ENCODE measurements at regions of chr1 and their contacts with region 1.

Region 1: DNA sequence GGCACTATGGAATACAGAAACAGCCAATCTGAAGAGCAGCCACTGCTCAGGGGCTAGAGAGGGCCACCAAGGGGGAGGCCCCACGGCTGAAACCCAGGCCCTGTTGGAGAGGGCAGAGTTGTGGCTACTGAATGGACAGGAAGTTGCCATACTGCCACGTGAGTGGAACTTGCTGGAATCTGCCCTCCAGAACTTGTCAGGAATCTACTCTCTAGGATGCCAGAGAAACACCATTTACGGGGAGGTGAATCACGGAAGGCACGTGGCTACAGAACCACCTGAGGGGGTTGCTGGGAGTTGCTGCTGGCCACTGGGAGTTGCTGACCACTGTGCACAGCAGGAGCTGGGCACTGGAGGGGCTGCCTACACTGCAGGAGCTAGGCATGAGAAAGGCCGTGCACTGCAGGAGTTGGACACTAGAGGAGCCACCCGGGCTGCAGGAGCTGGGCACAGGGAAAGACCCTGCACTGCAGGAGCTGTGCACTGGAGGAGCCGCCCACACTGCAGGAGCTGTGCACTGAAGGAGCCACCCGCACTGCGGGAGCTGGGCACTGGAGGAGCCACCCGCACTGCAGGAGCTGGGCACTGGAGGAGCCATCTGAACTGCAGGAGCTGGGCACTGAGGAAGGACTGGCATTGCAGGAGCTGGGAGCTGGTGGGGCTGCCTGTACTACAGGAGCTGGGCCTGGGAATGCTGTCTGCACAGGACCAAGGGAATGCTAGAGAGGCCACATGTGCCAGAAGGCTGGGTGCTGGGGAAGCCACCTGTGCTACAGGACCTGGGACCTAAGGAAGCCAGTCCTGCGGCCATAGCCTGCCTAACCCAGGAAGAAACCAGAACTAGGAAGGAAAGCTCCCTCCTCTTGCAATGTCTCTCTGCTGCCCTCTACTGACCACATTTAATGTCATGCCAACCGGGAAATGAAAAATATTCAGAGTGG is 343.4 kb downstream of the MATN1 start:
- DNase-seq: peak; percentile 26
- H3K4me3 ChIP-seq: no peak overlapping the region
- CTCF ChIP-seq: peak; percentile 82

Region 2: DNA sequence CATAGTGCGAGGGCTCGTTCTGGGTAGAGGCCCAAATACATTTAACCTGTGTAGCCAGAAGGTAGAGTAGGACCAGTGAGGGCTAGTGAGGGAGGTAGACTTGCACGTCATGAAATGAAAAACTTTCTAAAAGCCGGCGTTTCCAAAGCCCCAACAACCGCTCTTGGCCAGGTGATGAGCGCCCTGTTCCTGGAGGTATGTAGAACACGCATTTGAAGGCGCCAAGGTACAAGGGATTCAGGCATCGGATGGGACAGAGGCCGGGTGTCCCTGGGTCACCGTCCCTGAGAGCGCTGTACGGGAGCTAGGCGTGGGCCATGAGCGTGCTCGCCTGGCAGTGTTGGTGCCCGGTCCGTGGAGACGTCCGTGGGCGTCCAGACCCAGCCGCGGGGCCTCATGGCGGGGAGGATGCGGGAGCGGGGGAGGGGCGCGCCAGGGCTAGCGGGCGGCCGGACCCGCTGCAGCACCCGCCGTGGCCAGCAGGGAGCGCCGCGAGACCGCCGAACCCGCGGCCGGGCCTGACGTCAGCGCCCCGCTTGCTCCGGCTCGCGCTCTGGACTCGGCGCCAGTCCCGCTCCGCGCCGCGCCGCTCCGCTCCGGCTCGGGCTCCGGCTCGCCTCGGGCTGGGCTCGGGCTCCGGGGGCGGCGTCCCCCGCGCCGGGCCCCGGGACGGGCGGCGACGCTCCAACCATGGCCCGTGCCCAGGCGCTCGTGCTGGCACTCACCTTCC is 1143.8 kb before region 1 on chr1 and contains the start of gene PTPRU:
- CTCF ChIA-PET with region 1: interaction called, 15 read pairs
- POLR2A ChIA-PET with region 1: no interaction called
- DNase-seq: no peak
- H3K4me3 ChIP-seq: peak within 1 kb of the TSS; percentile 68
- CTCF ChIP-seq: peak; percentile 74

Region 3: DNA sequence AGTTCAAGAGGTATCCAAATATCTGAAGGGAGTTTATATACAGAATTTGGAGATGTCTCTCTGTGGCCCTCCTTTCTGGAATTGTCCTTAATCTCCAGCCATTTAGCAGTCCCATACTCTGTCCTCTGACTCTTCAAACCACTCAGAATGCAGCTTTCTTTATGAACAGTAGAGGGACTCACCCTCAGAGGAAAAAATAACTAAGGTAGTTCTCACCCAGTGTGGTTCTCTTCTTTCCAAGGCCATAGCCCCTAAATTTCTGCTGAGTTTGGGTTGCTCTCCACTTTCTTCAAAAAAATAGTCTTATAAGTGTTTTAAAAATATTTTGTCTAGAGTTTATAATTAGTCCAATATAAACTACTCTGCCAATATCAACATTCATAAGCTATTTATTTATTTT is 26.3 kb before region 1 on chr1:
- CTCF ChIA-PET with region 1: interaction called, 36 read pairs
- POLR2A ChIA-PET with region 1: no interaction called
- DNase-seq: no peak
- H3K4me3 ChIP-seq: no peak overlapping the region
- CTCF ChIP-seq: peak; percentile 28

Region 4: GRCh38 chr1:30359539-30360220 is 20.3 kb before region 1 on chr1:
- CTCF ChIA-PET with region 1: interaction called, 36 read pairs
- POLR2A ChIA-PET with region 1: no interaction called
- DNase-seq: no peak
- H3K4me3 ChIP-seq: no peak overlapping the region
- CTCF ChIP-seq: no peak

Region 5: GRCh38 chr1:30366911-30367310 is 13.0 kb before region 1 on chr1:
- CTCF ChIA-PET with region 1: interaction called, 18 read pairs
- POLR2A ChIA-PET with region 1: no interaction called
- DNase-seq: no peak
- H3K4me3 ChIP-seq: no peak overlapping the region
- CTCF ChIP-seq: no peak

Region 6: DNA sequence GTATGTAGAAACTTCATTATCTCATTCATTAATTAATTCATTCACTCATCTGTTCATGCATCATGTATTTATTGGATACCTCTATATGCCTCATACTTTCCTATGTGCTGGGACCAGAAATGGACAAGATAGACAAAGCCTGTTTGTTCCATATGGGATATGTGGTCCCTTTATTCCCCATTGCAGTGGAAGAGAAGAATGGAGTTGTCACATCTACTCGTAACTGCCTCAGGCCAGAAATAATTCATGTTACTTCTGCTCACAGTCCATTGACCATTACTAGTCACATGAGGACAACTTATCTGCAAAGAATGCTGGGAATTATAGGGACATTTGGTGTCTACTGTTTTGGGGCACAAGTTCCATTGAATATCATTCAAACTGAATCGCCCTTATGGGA is 15.7 kb after region 1 on chr1:
- CTCF ChIA-PET with region 1: interaction called, 27 read pairs
- POLR2A ChIA-PET with region 1: no interaction called
- DNase-seq: no peak
- H3K4me3 ChIP-seq: no peak overlapping the region
- CTCF ChIP-seq: no peak

Region 7: GRCh38 chr1:30611741-30612309 is 231.9 kb after region 1 on chr1:
- CTCF ChIA-PET with region 1: no interaction called
- POLR2A ChIA-PET with region 1: no interaction called
- DNase-seq: no peak
- H3K4me3 ChIP-seq: no peak overlapping the region
- CTCF ChIP-seq: no peak

Measured in AG04449 (cell line).